HCT116 (cell line): ENCODE measurements at regions of chr1 and their contacts with region 1.

Region 1: DNA sequence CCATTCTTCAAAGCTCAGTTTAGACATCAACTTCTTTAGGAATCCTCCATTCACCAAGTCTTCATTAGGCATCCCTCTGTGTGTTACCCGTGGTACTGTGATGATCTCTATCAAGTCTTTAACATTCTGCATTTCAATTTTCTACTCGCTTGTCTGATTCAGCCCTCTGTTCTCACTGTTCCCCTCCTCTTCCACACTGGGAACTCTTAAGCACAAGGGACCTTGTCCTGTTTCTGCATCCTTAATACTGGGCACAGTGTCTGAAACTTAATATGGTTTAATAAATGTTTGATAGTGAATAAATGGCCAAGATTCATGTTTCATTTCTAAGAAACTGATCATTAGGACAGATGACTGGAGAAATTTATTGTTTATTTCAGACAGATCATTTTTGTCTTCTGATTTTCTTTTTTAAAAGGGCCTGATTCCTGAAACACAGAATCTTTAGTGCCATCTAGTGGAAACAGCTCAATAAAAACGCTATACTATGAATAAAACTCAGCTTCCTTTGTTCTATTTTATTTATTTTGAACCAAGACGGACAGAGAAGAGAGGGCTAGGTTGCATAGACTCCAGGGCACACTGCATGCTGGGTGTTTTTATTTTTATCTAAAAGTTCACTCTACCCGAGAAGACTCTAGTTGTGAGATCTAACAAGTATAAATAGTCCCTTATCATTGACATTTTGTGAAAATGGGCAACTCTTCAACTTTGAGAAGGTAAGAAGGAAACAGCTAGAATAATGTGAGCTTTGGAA is 7.0 kb upstream of the TRIM45 start:
- DNase-seq: peak; percentile 33
- ATAC-seq: peak; percentile 91
- H3K4me3 ChIP-seq: no peak overlapping the region
- H3K27ac ChIP-seq: no peak overlapping the region
- H3K4me1 ChIP-seq: 0 out of 4 replicates have a peak, but pooled peaks cover 0 to 2% of the 10 kb centered on the region in 2 experiments
- H3K27me3 ChIP-seq: peaks cover 9% of the 10 kb centered on the region; the same call in 1 of the 2 replicates
- CTCF ChIP-seq: peak; percentile 38 to 69 (median 63)
- POLR2A ChIP-seq: no peak
- RAD21 ChIP-seq: peak; percentile 64

Region 2: GRCh38 chr1:117067533-117068370 is 60.7 kb before region 1 on chr1:
- CTCF ChIA-PET with region 1: interaction called, 31 read pairs
- POLR2A ChIA-PET with region 1: no interaction called
- RAD21 ChIA-PET with region 1: interaction called, 5 to 6 read pairs
- intact Hi-C with region 1: loop called (anchors 1 kb)
- DNase-seq: peak; percentile 18
- ATAC-seq: peak; percentile 95
- H3K4me3 ChIP-seq: no peak overlapping the region
- H3K27ac ChIP-seq: no peak overlapping the region
- H3K4me1 ChIP-seq: no peaks in the 10 kb centered on the region
- H3K27me3 ChIP-seq: no peaks in the 10 kb centered on the region
- CTCF ChIP-seq: peak; percentile 69 to 74 (median 69)
- POLR2A ChIP-seq: no peak
- RAD21 ChIP-seq: peak; percentile 89

Region 3: DNA sequence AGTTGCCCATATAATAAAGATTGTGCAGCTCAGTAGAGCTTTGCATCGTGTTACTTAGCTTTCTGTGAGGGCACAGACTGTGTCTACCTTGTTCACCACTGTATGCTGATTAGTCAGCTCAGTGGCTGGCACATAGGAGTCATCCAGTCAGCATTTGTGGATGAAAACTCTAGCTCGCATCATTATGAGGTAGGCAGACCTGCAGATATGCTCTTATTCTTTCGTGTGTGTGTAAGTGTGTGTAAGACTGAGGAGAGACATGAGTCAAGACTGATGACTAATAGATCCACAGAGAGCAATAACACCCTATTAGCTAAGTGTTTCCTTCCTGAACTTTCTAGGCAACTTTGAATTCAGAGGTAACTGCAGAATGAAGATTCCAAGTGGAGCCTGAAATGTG is 51.2 kb before region 1 on chr1:
- CTCF ChIA-PET with region 1: interaction called, 10 read pairs
- POLR2A ChIA-PET with region 1: interaction called, 3 read pairs
- RAD21 ChIA-PET with region 1: interaction called in 1 of 2 experiments, 3 read pairs
- intact Hi-C with region 1: no loop called
- DNase-seq: peak; percentile 48
- ATAC-seq: peak; percentile 40; the same call in 1 of the 2 replicates
- H3K4me3 ChIP-seq: no peak overlapping the region
- H3K27ac ChIP-seq: no peak overlapping the region
- H3K4me1 ChIP-seq: peaks cover 0 to 8% of the 10 kb centered on the region in 2 experiments; a peak in 2 of 4 replicates
- H3K27me3 ChIP-seq: no peaks in the 10 kb centered on the region
- CTCF ChIP-seq: no peak
- POLR2A ChIP-seq: no peak
- RAD21 ChIP-seq: no peak

Region 4: GRCh38 chr1:117093870-117094621 is 34.5 kb before region 1 on chr1:
- CTCF ChIA-PET with region 1: interaction called, 10 read pairs
- POLR2A ChIA-PET with region 1: no interaction called
- RAD21 ChIA-PET with region 1: no interaction called
- intact Hi-C with region 1: no loop called
- DNase-seq: peak; percentile 8
- ATAC-seq: peak; percentile 77
- H3K4me3 ChIP-seq: no peak overlapping the region
- H3K27ac ChIP-seq: no peak overlapping the region
- H3K4me1 ChIP-seq: peaks cover 4 to 14% of the 10 kb centered on the region in 2 experiments; a peak in 3 of 4 replicates
- H3K27me3 ChIP-seq: no peaks in the 10 kb centered on the region
- CTCF ChIP-seq: peak in 2 of 3 experiments; percentile 40 to 44; a peak in 4 of 6 replicates
- POLR2A ChIP-seq: no peak
- RAD21 ChIP-seq: no peak

Region 5: DNA sequence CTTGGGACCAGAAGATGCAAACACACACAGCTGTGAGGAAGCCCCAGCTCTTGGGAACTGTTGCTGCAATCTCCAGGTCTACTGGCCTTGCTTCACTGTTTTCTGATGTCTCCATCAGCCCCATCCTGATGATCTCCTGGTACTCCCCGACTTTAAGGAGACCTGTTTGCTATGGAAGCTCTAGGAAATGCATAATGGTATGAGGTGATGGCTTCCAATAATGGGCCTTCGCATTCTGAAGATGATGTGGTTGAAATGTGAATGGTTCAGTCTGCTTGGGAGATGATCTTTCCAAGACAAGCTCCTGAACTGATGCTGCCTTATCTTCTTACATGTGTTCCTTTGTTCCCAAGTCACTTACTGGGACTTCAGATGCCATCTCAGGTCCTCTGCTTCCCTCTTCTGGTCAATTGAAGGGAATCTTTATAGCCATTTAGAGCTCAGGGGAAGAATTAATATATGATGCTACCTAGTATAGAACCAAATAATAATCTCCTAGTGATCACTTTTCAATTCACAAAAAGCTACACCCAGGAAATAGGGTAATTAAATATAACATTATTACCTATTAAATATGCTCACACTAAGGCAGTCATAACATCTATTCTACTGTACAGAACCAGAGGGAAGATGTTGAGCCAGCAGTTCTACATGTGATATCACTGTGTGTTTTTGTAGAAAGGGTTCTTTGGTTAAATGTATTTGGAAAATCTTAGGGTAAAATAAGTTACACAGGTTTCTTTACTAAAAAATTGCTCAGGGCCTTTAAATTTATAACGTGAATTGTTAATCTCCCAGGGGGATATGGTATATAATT is 156.1 kb after region 1 on chr1:
- CTCF ChIA-PET with region 1: interaction called, 32 read pairs
- POLR2A ChIA-PET with region 1: no interaction called
- RAD21 ChIA-PET with region 1: interaction called, 4 to 10 read pairs
- intact Hi-C with region 1: loop called (anchors 2 kb)
- DNase-seq: peak; percentile 57
- ATAC-seq: peak; percentile 94
- H3K4me3 ChIP-seq: no peak overlapping the region
- H3K27ac ChIP-seq: no peak overlapping the region
- H3K4me1 ChIP-seq: no peaks in the 10 kb centered on the region
- H3K27me3 ChIP-seq: no peaks in the 10 kb centered on the region
- CTCF ChIP-seq: peak; percentile 55 to 75 (median 73); a peak in 5 of 6 replicates
- POLR2A ChIP-seq: no peak
- RAD21 ChIP-seq: peak; percentile 94